Dorsolateral prefrontal cortex (tissue), 120 donors: ENCODE measurements at regions of chr9 and their contacts with region 1.

Region 1: DNA sequence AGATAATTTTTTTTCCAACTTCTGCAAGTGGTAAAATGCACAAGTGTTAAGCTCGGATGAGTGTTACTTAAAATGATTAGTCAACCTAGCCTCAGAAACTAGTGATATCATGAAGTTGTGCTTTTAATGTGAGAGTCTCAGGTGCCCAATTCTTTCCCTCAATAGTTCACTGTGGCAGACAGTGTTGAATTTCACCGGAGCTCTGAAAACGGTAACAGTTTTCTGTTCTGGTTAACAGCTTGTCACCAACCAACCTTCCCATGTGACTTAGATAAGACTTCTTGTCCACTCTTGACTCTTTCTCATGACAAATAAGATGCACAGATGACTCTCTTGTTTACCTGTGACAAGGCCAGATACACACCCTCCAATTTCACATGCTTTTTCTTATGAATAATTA is 125.5 kb downstream of the OSTF1 start:
- DNase-seq: no peak
- H3K4me3 ChIP-seq: no peak overlapping the region
- H3K27ac ChIP-seq: no peak overlapping the region
- H3K27me3 ChIP-seq: no peaks in the 10 kb centered on the region
- CTCF ChIP-seq: no peak

Region 2: DNA sequence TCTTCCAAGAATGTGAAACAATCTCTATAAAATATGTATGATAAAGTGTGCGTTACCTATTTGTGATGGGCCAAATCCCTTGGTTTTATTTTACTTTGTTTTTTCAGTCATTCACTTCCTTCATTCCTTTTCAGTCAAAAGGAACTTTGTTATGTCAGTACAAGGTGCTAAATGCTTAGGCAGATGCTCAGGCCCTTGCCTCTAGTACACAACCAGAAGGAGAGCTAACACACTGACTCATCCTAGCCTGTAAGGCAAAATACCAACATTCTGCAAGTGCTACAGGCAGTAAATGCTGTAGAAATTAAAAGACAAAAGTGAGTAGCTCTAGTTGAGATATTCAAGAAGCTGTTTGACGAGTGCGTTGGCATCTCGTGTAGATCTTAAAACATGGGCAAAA is 375.4 kb before region 1 on chr9:
- intact Hi-C with region 1: loop called in 1 of 2 experiments (anchors 10 kb)
- DNase-seq: peak in 1 of 10 donors; percentile 14
- H3K4me3 ChIP-seq: no peak overlapping the region
- H3K27ac ChIP-seq: no peak overlapping the region
- H3K27me3 ChIP-seq: no peaks in the 10 kb centered on the region
- CTCF ChIP-seq: no peak

Region 3: DNA sequence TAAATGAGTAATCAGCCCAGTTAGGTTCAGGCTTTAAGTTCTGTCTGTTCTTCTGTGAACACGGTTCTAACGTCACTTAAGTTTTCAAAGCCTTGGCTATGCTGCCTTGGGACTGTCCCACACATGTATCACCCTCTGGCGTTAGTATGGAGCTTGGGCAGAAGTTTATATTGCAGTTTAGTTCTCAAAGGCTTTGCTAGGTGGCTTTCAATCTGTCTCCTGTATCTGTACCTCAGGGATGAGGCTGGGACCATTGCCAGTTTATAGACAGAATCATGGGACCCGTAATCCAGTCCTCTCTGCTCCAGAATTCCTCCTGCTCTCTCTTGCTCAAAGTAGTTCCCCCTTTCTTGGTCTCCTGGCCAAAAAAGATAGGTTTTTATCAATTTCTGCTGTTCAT is 273.2 kb before region 1 on chr9:
- intact Hi-C with region 1: no loop called
- DNase-seq: no peak
- H3K4me3 ChIP-seq: no peak overlapping the region
- H3K27ac ChIP-seq: no peak overlapping the region
- H3K27me3 ChIP-seq: no peaks in the 10 kb centered on the region
- CTCF ChIP-seq: no peak

Region 4: DNA sequence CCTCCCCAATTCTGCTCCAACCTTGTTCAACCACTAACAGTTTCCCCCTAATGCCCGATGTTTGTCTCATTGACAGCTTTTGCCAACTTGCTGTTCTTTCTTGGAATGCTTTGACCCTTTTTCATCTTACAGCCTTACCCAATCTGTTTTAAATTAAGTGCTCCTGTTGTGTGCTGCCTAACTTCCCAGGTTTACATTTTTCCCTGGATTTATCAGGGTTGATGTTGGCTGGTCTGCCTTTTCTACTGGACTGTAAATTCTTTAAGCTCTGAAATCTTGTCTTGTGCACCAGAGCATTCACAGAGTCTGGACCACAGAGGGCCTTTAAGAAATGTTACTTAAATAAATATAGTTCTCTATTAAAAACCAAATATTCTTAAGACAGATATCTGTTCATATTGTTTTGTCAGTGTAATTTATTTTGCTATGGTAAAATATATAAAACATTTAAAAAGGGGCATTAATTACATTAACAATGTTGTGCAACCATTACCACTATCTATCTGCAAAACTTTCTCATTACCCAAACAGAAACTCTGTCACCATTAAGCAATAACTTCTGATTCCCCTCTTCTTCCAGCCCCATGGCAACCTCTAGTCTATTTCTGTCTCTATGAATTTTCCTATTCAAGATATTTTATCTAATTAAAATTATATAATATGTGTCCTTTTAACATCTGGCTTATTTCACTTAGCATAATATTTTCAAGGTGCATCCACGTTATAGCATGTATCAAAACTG is 52.5 kb before region 1 on chr9:
- intact Hi-C with region 1: no loop called
- DNase-seq: no peak
- H3K4me3 ChIP-seq: no peak overlapping the region
- H3K27ac ChIP-seq: no peak overlapping the region
- H3K27me3 ChIP-seq: no peaks in the 10 kb centered on the region
- CTCF ChIP-seq: no peak